Activated T-helper 2 cell treated with anti-CD3 and anti-CD28 coated beads, Interferon-gamma antibody, Interleukin-2, Interleukin-4, amounts not matched to agents 10 μg/mL and 5 μg/mL and 100 μg/mL, durations not matched to agents 14 hours and 24 hours and 36 hours (primary cell): ENCODE measurements at regions of chr22 and their contacts with region 1.

Region 1: DNA sequence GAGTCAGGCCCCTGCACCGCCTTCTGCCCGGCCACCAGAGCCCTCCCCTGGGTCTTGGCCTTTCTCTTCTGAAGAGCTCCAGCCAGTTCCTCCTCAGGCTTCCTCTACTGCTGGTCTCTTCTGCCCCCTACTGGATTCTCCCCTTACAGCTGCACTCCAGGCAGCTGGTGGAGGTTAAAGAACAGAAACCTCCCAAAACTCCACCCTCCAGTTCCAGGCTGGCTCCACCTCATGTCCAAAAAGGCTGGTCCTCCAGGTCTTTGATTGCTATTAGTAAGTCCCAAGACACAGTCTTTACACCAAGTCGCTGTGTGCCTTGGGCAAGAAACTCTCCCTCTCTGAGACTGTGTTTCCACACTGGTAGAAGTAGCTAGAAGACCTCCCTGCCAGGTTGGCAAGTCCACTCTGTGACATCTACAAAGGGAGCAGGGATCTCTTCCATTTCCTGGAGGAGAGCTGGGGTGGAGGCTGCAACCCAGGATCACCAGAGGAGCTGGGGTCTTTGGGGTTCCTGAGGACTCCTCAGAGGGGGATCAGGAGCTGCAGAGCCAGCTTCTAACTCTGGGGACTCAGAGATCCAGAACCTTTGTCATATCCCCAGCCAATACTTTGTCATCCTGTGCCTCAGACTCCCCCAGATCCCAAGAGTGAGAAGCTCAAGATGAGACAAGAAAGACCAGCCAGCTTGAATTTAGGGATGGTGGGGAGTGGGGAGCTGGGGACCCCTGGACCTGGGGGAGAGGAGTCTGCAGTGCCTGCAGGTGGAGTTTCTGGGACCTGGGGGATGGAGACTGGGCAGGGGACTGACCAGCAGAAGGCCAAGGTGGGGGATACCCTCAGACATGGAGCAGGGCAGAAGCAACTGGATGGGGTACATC is 3.4 kb upstream of the IGLL5 start:
- DNase-seq: peak; percentile 64
- H3K4me3 Mint-ChIP-seq: no peak overlapping the region
- H3K27ac Mint-ChIP-seq: no peak overlapping the region
- H3K4me1 Mint-ChIP-seq: peaks cover 15% of the 10 kb centered on the region
- H3K27me3 Mint-ChIP-seq: peaks cover 29% of the 10 kb centered on the region

Region 2: GRCh38 chr22:22787786-22788459 is 96.3 kb before region 1 on chr22:
- intact Hi-C with region 1: loop called (anchors 5 kb)
- DNase-seq: peak; percentile 52
- H3K4me3 Mint-ChIP-seq: no peak overlapping the region
- H3K27ac Mint-ChIP-seq: no peak overlapping the region
- H3K4me1 Mint-ChIP-seq: peaks cover 6% of the 10 kb centered on the region
- H3K27me3 Mint-ChIP-seq: peaks cover 15% of the 10 kb centered on the region

Region 3: GRCh38 chr22:22848364-22848866 is 35.8 kb before region 1 on chr22:
- intact Hi-C with region 1: loop called (anchors 2 kb)
- DNase-seq: peak; percentile 53
- H3K4me3 Mint-ChIP-seq: no peak overlapping the region
- H3K27ac Mint-ChIP-seq: no peak overlapping the region
- H3K4me1 Mint-ChIP-seq: peaks cover 2% of the 10 kb centered on the region
- H3K27me3 Mint-ChIP-seq: peaks cover 42% of the 10 kb centered on the region

Region 4: GRCh38 chr22:23144932-23145873 is 261.0 kb after region 1 on chr22 and contains the start of gene RAB36:
- intact Hi-C with region 1: no loop called
- DNase-seq: peak; percentile 85
- H3K4me3 Mint-ChIP-seq: peak within 1 kb of the TSS; percentile 60
- H3K27ac Mint-ChIP-seq: no peak within 1 kb of the TSS
- H3K4me1 Mint-ChIP-seq: peaks cover 24% of the 10 kb centered on the region
- H3K27me3 Mint-ChIP-seq: peaks cover 11% of the 10 kb centered on the region
- total RNA-seq, gene RAB36: not detected in 2 replicates